CD4-positive, alpha-beta T cell (primary cell): ENCODE measurements at regions of chr12 and their contacts with region 1.

Region 1: DNA sequence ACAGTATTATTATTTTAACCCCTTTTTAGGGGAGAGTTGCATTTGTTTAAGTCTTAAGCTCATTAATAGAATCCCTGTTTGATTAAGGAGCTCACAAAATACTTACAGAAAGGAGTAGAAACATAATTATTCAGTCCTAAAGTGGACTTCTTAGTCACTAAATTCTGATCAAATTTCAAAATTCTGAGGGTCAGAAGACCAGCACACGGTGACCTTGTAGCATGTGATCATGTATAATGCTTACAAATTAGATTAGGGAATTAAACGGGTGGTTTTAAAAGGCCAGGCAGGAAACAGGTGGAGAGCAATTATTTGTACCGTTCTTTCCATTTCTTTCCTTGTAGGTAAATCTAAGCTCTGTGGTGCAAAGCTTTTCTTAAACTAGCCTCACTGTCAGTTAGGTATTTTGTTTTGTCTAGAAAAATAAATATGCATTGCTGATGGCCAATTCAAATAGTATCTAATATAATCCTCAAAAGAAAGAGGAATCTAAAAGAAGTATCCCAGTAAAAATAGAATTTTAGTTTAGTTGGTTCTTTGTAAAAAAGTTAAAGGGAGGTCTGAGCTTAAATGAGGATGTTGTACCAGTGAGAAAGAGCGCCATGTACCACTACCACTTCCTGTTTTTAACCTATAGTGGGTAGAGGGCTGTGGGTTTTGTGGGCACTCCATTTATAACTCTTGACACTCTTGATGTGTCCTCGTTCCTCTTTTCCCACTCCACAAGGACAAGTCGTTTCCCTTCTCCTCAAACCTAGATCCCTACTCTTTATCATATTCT is 51.1 kb downstream of the SLC38A1 start:
- DNase-seq: peak in 10 of 14 experiments; percentile 22 to 90 (median 56)
- ATAC-seq: peak; percentile 33
- H3K4me3 ChIP-seq: peak overlapping the region; percentile 40
- H3K4me3 Mint-ChIP-seq: peak overlapping the region; percentile 85
- H3K27ac ChIP-seq: peak overlapping the region; percentile 91 to 94
- H3K27ac Mint-ChIP-seq: peak overlapping the region; percentile 96
- H3K4me1 ChIP-seq: peaks cover 78% of the 10 kb centered on the region
- H3K4me1 Mint-ChIP-seq: peaks cover 98% of the 10 kb centered on the region
- H3K27me3 ChIP-seq: no peaks in the 10 kb centered on the region
- H3K27me3 Mint-ChIP-seq: no peaks in the 10 kb centered on the region
- CTCF ChIP-seq: no peak

Region 2: GRCh38 chr12:46200551-46200950 is 17.2 kb before region 1 on chr12:
- CTCF ChIA-PET with region 1: interaction called, 5 read pairs
- POLR2A ChIA-PET with region 1: interaction called, 94 read pairs
- intact Hi-C with region 1: loop called in 1 of 2 experiments (anchors 2 kb)
- DNase-seq: no peak
- ATAC-seq: no peak
- H3K4me3 ChIP-seq: no peak overlapping the region
- H3K4me3 Mint-ChIP-seq: no peak overlapping the region
- H3K27ac ChIP-seq: no peak overlapping the region
- H3K27ac Mint-ChIP-seq: no peak overlapping the region
- H3K4me1 ChIP-seq: no peaks in the 10 kb centered on the region
- H3K4me1 Mint-ChIP-seq: peaks cover 53% of the 10 kb centered on the region
- H3K27me3 ChIP-seq: no peaks in the 10 kb centered on the region
- H3K27me3 Mint-ChIP-seq: no peaks in the 10 kb centered on the region
- CTCF ChIP-seq: no peak

Region 3: GRCh38 chr12:46237371-46238045 is 19.8 kb after region 1 on chr12:
- CTCF ChIA-PET with region 1: interaction called, 12 read pairs
- POLR2A ChIA-PET with region 1: interaction called, 17 read pairs
- intact Hi-C with region 1: no loop called
- DNase-seq: peak in 2 of 14 experiments; percentile 27 to 40
- ATAC-seq: no peak
- H3K4me3 ChIP-seq: no peak overlapping the region
- H3K4me3 Mint-ChIP-seq: peak overlapping the region; percentile 4
- H3K27ac ChIP-seq: peak overlapping the region in 1 of 2 donors; percentile 4
- H3K27ac Mint-ChIP-seq: peak overlapping the region; percentile 56
- H3K4me1 ChIP-seq: peaks cover 28% of the 10 kb centered on the region
- H3K4me1 Mint-ChIP-seq: peaks cover 87% of the 10 kb centered on the region
- H3K27me3 ChIP-seq: no peaks in the 10 kb centered on the region
- H3K27me3 Mint-ChIP-seq: no peaks in the 10 kb centered on the region
- CTCF ChIP-seq: no peak

Region 4: DNA sequence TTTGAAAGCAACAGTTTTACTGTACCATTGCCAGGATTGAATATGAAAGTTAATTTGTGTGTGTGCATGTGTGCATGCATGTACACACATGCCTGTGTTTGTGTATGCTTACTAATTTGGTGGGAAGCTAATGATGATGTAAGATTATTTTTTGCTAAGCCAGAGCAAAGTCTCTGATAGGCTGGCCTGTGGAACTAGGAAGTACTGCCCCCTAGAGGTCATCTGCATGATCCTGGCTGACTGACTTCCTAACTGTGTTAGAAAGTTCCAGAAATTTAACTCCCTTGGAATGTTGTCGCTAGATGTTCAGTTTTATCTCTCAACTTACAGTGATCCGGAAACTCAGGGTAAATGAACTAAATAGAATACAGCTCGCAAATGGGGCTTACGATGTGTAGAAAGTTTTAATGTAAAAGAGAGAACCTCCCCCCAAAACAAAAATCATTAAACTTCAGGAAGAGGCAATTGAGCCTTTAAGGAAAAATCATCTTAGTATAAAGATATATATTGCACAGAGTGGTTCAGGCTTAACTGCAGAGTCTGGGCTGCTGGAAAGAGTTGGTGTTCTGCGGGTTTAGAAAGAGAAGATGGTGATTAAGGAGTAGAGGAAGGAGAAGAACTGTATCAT is 85.4 kb after region 1 on chr12:
- CTCF ChIA-PET with region 1: interaction called, 10 read pairs
- POLR2A ChIA-PET with region 1: interaction called, 5 read pairs
- intact Hi-C with region 1: no loop called
- DNase-seq: peak; percentile 15 to 86 (median 44)
- ATAC-seq: peak; percentile 89
- H3K4me3 ChIP-seq: no peak overlapping the region
- H3K4me3 Mint-ChIP-seq: no peak overlapping the region
- H3K27ac ChIP-seq: no peak overlapping the region
- H3K27ac Mint-ChIP-seq: no peak overlapping the region
- H3K4me1 ChIP-seq: no peaks in the 10 kb centered on the region
- H3K4me1 Mint-ChIP-seq: peaks cover 18% of the 10 kb centered on the region
- H3K27me3 ChIP-seq: no peaks in the 10 kb centered on the region
- H3K27me3 Mint-ChIP-seq: no peaks in the 10 kb centered on the region
- CTCF ChIP-seq: peak; percentile 96

Region 5: DNA sequence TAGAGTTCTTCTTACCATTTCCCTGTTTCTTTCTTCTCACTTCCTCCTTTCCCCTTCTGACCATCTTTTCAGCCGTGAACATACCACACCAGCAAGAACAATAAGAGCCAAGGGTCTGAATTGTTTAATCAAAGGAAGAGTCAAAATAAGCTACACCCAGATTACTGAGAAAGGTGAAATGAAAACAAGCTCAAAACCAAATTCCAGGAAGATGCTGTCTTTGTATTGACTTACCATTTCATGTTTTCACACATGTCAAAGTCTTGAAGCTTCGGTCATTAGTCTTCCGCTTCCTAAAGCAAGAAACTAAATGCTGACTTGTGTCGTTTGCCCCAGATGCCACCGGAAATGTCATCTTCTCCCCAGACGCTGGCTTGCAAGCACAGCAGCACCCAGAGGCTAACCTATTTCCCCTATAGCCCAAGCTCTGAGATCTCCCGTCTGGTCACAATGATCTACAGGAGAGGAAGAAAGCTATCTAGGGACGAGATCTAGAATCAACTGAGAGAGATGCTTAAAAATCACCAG is 998.5 kb after region 1 on chr12:
- CTCF ChIA-PET with region 1: no interaction called
- POLR2A ChIA-PET with region 1: no interaction called
- intact Hi-C with region 1: no loop called
- DNase-seq: peak; percentile 34 to 92 (median 64)
- ATAC-seq: peak; percentile 57
- H3K4me3 ChIP-seq: peak overlapping the region; percentile 71
- H3K4me3 Mint-ChIP-seq: peak overlapping the region; percentile 99
- H3K27ac ChIP-seq: peak overlapping the region; percentile 43 to 68
- H3K27ac Mint-ChIP-seq: peak overlapping the region; percentile 96
- H3K4me1 ChIP-seq: peaks cover 32% of the 10 kb centered on the region
- H3K4me1 Mint-ChIP-seq: peaks cover 78% of the 10 kb centered on the region
- H3K27me3 ChIP-seq: no peaks in the 10 kb centered on the region
- H3K27me3 Mint-ChIP-seq: no peaks in the 10 kb centered on the region
- CTCF ChIP-seq: no peak